ENCODE measurements at regions of chr17 and their contacts with region 1.

Region 1: GRCh38 chr17:4839965-4840892 is 7.1 kb downstream of the MINK1 start:
- DNase-seq: no peak
- H3K4me3 ChIP-seq: no peak overlapping the region
- H3K27ac ChIP-seq: no peak overlapping the region
- H3K4me1 ChIP-seq: peaks cover 12% of the 10 kb centered on the region
- H3K27me3 ChIP-seq: no peaks in the 10 kb centered on the region
- CTCF ChIP-seq: no peak

Region 2: DNA sequence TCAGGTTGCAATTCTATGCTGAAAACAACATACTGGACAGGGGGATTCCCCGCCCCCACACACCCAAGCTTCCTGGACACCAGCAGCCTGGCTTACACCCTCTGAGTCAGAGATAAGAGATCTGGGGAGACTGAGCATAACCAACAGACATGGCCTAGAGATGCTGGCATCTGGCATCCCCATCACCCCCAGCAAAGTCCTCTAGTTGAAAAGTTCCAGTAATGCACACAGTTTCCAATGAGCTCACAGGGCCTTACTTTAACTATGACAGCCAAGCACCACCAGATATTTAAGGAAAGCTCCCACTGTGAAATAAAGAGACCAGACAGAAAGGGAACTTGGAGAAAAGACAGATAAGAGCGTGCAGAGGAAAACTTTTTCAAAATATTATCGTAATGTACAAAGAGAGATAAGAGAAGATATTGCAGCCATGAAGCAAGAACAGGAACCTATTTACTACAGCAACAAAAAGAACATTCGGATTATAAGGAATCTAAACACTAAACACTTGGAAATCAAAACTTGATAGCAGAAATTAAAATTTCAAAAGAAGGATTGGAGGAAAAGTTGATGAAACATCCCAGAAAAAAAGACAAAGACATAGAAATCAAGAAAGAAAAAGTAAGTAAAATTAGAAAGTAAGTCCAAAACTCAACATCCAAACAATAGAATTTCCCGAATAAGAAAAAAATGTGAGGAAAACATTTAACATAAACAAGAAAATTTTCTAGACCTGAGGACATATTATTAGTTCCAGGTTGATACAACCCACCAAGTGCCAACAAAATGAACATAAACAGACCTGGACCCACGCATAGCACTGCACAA is 181.5 kb before region 1 on chr17:
- CTCF ChIA-PET with region 1: no interaction called
- dilution Hi-C with region 1: no loop called
- in situ Hi-C with region 1: no loop called
- intact Hi-C with region 1: no loop called
- DNase-seq: peak; percentile 56
- H3K4me3 ChIP-seq: no peak overlapping the region
- H3K27ac ChIP-seq: no peak overlapping the region
- H3K4me1 ChIP-seq: no peaks in the 10 kb centered on the region
- H3K27me3 ChIP-seq: no peaks in the 10 kb centered on the region
- CTCF ChIP-seq: no peak

Region 3: GRCh38 chr17:4771519-4772234 is 68.6 kb before region 1 on chr17 and contains the start of gene TM4SF5:
- CTCF ChIA-PET with region 1: no interaction called
- dilution Hi-C with region 1: loop called (anchors 5 kb)
- in situ Hi-C with region 1: no loop called
- intact Hi-C with region 1: no loop called
- DNase-seq: peak; percentile 6
- H3K4me3 ChIP-seq: no peak within 1 kb of the TSS
- H3K27ac ChIP-seq: no peak within 1 kb of the TSS
- H3K4me1 ChIP-seq: no peaks in the 10 kb centered on the region
- H3K27me3 ChIP-seq: no peaks in the 10 kb centered on the region
- CTCF ChIP-seq: no peak
- total RNA-seq, gene TM4SF5: not detected

Region 4: GRCh38 chr17:4815043-4815675 is 25.1 kb before region 1 on chr17:
- CTCF ChIA-PET with region 1: no interaction called
- dilution Hi-C with region 1: no loop called
- in situ Hi-C with region 1: no loop called
- intact Hi-C with region 1: no loop called
- DNase-seq: no peak
- H3K4me3 ChIP-seq: no peak overlapping the region
- H3K27ac ChIP-seq: no peak overlapping the region
- H3K4me1 ChIP-seq: no peaks in the 10 kb centered on the region
- H3K27me3 ChIP-seq: no peaks in the 10 kb centered on the region
- CTCF ChIP-seq: peak; percentile 34 to 42